Head of caudate nucleus (tissue), 42 donors: ENCODE measurements at regions of chr7 and their contacts with region 1.

Region 1: DNA sequence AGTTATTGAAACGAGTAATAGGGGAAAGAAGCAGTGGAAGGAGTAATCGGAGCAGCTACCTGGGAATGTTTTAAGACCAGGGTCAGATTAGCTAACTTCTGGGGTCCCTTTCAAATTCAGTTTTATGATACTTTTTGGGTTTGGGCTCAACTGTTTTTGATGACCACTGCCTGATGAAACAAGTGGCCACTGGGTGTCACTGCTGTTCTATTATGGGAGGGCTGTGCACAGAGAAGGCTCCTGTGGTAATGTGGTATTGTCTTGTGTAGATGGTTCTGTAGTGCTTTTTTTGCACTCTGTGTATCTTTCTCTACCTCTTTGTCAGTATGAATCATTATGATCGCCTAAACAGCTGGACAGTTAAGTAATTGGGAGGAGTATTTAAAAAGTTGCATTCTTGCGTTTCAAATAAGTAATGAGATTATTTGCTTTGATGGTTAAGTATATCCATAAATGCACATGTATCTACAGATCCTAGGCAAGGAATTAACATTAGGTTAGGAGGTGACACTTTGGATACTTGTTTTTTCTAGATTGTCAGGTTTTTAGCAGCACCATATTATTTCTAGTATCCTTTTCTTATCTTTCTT is 128.4 kb downstream of the ABCA13 start:
- DNase-seq: peak in 41 of 42 donors; percentile 26 to 86 (median 65)

Region 2: GRCh38 chr7:47763063-47763974 is 536.4 kb before region 1 on chr7:
- intact Hi-C with region 1: no loop called
- DNase-seq: peak in 1 of 42 donors; percentile 22

Region 3: DNA sequence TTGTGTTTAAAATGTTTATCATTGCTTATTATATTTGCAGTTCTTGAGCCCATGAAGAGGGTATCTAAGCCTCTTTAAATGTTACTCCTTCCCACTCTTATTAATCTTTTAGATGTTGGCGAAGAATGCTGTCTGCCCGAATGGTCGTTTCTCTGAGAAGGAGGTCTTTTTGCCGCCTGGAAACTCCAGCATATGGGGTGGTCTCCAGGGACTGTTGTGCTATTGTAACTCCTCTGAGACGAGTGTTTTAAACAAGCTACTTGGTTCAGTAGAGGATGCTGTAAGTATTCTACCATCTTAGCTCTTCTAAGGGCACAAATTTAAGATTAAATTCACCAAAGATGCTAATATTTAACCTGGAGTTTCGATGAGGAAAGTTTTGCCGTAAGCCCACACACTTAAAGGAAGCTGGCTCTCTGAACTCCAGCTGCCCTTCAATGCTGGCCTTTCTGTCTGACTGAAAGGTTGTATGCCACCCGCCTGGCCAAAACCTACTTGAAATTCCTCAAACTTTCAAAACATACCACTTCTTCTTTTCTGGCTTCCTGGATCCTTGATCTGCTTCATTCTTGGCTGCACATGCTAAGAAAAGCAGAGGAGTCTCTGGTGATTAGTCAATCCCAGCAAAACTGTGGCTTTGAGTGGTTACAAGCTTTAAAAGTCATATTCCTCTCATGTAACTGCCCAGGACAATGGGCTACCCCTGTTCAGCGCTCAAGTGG is 53.8 kb before region 1 on chr7:
- intact Hi-C with region 1: no loop called
- DNase-seq: peak in 3 of 42 donors; percentile 1 to 37 (median 9)

Region 4: GRCh38 chr7:48875045-48875916 is 575.6 kb after region 1 on chr7:
- intact Hi-C with region 1: loop called (anchors 10 kb)
- DNase-seq: peak; percentile 19 to 83 (median 64)